ENCODE measurements at regions of chr17 and their contacts with region 1.

Region 1: GRCh38 chr17:41308251-41308917 is 725 bp downstream of the KRTAP16-1 start:
- DNase-seq: no peak
- H3K4me3 ChIP-seq: no peak overlapping the region
- H3K27ac ChIP-seq: no peak overlapping the region
- H3K4me1 ChIP-seq: no peaks in the 10 kb centered on the region
- H3K27me3 ChIP-seq: no peaks in the 10 kb centered on the region
- CTCF ChIP-seq: no peak

Region 2: DNA sequence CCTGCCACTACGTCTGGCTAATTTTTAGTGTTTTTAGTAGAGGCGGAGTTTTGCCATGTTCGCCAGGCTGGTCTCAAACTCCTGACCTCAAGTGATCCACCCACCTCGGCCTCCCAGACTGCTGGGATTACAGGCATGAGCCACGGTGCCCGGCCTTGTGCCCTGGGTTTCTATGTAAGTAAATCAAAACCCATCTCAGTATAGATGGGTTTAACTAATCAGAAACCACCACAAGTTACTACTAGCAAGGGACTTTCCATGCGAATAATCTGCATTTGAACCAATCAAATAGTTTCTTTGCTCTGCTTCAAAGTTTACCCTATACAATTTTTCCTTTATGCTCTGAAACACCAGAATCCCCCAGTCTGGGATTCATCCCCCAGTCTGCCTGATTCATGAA is 363.8 kb after region 1 on chr17:
- CTCF ChIA-PET with region 1: no interaction called
- POLR2A ChIA-PET with region 1: interaction called, 34 read pairs
- intact Hi-C with region 1: no loop called
- DNase-seq: no peak
- H3K4me3 ChIP-seq: no peak overlapping the region
- H3K27ac ChIP-seq: no peak overlapping the region
- H3K4me1 ChIP-seq: peaks cover 9% of the 10 kb centered on the region; the same call in 1 of the 2 replicates
- H3K27me3 ChIP-seq: no peaks in the 10 kb centered on the region
- CTCF ChIP-seq: no peak

Measured in PC-9 (cell line).